HEK293 (cell line): ENCODE measurements at regions of chr3 and their contacts with region 1.

Region 1: GRCh38 chr3:122033023-122033422 is 11.0 kb upstream of the ILDR1 start:
- H3K4me3 ChIP-seq: no peak overlapping the region
- H3K27ac ChIP-seq: no peak overlapping the region
- H3K4me1 ChIP-seq: no peaks in the 10 kb centered on the region
- CTCF ChIP-seq: no peak

Region 2: GRCh38 chr3:121654493-121655385 is 378.3 kb before region 1 on chr3:
- CTCF ChIA-PET with region 1: no interaction called
- POLR2A ChIA-PET with region 1: interaction called, 11 read pairs
- H3K4me3 ChIP-seq: no peak overlapping the region
- H3K27ac ChIP-seq: no peak overlapping the region
- H3K4me1 ChIP-seq: no peaks in the 10 kb centered on the region
- CTCF ChIP-seq: no peak

Region 3: GRCh38 chr3:122101646-122102045 is 68.6 kb after region 1 on chr3:
- CTCF ChIA-PET with region 1: no interaction called
- POLR2A ChIA-PET with region 1: no interaction called
- H3K4me3 ChIP-seq: no peak overlapping the region
- H3K27ac ChIP-seq: no peak overlapping the region
- H3K4me1 ChIP-seq: no peaks in the 10 kb centered on the region
- CTCF ChIP-seq: 0 out of 2 replicates have a peak, but pooled peaks have one; percentile 13